ENCODE measurements at regions of chr22 and their contacts with region 1.

Region 1: GRCh38 chr22:44664149-44664548 is 37.9 kb upstream of the PRR5 start:
- DNase-seq: peak; percentile 75 to 76
- ATAC-seq: peak; percentile 53 to 76 (median 73)
- H3K4me3 ChIP-seq: no peak overlapping the region
- H3K4me3 Mint-ChIP-seq: peak overlapping the region; percentile 62
- H3K27ac ChIP-seq: peak overlapping the region; percentile 70
- H3K27ac Mint-ChIP-seq: peak overlapping the region; percentile 81 to 90
- H3K4me1 ChIP-seq: peaks cover 69% of the 10 kb centered on the region
- H3K4me1 Mint-ChIP-seq: peaks cover 42 to 56% of the 10 kb centered on the region in 2 donors
- H3K27me3 ChIP-seq: no peaks in the 10 kb centered on the region
- H3K27me3 Mint-ChIP-seq: no peaks in the 10 kb centered on the region
- CTCF ChIP-seq: no peak

Region 2: GRCh38 chr22:44603767-44604166 is 60.4 kb before region 1 on chr22:
- intact Hi-C with region 1: loop called (anchors 2 kb)
- DNase-seq: peak in 1 of 2 donors; percentile 43
- ATAC-seq: peak in 2 of 3 donors; percentile 57 to 73
- H3K4me3 ChIP-seq: no peak overlapping the region
- H3K4me3 Mint-ChIP-seq: peak overlapping the region; percentile 66
- H3K27ac ChIP-seq: no peak overlapping the region
- H3K27ac Mint-ChIP-seq: peak overlapping the region; percentile 24 to 79
- H3K4me1 ChIP-seq: peaks cover 33% of the 10 kb centered on the region
- H3K4me1 Mint-ChIP-seq: peaks cover 37 to 49% of the 10 kb centered on the region in 2 donors
- H3K27me3 ChIP-seq: peaks cover 2% of the 10 kb centered on the region
- H3K27me3 Mint-ChIP-seq: peaks cover 27 to 32% of the 10 kb centered on the region in 2 donors
- CTCF ChIP-seq: no peak

Region 3: DNA sequence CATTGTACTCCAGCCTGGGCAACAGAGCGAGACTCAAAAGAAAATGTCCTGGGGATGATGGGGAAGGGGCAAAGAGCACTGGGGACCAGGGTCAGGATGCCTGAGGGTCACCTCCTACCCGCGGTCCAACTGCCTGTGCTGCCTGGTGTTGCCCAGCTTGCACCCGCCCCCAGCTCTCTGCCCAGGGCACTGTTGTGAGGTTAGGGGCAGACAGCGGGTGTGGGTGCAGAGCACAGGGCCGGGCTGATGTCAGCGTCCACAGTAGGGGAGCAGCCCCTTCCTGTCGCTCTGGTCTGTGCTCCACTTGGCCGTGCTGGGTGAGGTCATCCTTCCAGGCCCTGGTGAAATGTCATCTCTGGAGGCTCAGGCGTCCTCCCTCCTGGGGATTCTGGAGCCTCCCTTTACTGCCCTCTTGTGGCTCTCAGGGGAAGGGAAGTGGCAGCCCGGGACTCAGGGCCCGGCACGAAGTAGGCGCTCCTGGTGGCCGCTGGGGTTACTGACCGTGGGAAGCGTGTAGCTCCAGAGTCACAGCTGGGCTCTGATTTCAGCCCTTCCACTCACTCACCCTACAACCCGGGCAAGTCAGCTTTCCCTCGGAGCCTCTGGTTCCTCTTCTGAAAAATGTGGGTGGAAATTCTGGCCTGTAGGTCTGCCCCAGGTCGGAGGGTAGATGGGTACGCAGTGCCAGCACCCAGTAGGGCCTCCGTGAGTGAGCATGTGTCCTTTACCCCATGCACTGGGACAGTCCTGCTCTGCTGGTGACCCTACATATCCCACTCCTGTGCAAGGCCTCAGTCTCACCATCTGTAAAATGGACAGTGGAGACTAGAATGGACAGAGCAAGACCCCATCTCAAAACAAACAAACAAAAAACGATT is 20.6 kb after region 1 on chr22:
- intact Hi-C with region 1: loop called (anchors 2 kb)
- DNase-seq: peak; percentile 80 to 93
- ATAC-seq: peak; percentile 85 to 93 (median 88)
- H3K4me3 ChIP-seq: no peak overlapping the region
- H3K4me3 Mint-ChIP-seq: peak overlapping the region; percentile 76
- H3K27ac ChIP-seq: peak overlapping the region; percentile 71
- H3K27ac Mint-ChIP-seq: peak overlapping the region; percentile 81 to 84
- H3K4me1 ChIP-seq: peaks cover 59% of the 10 kb centered on the region
- H3K4me1 Mint-ChIP-seq: peaks cover 47 to 75% of the 10 kb centered on the region in 2 donors
- H3K27me3 ChIP-seq: no peaks in the 10 kb centered on the region
- H3K27me3 Mint-ChIP-seq: no peaks in the 10 kb centered on the region
- CTCF ChIP-seq: peak; percentile 99

Measured in natural killer cell (primary cell).